Natural killer cell (primary cell): ENCODE measurements at regions of chr6 and their contacts with region 1.

Region 1: DNA sequence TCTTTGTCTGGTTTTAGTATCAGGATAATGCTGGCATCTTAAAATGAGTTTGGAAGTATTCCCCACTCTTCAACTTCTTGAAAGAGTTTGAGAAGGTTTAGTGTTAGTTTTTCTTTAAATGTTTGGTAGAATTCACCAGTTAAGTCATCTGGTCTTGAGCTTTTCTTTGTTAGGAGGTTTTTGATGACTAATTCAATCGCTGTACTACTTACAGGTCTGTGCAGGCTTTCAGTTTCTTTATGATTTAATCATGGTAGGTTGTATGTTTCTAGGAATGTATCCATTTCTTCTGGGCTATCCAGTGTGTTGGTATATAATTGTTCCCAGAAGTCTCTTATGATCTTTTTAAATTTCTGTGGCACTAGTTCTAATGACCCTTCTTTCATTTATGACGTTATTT is 215.5 kb downstream of the LRFN2 start:
- DNase-seq: no peak
- ATAC-seq: peak; percentile 58 to 72 (median 69)
- H3K4me3 ChIP-seq: no peak overlapping the region
- H3K4me3 Mint-ChIP-seq: peak overlapping the region; percentile 78
- H3K27ac ChIP-seq: peak overlapping the region; percentile 30
- H3K27ac Mint-ChIP-seq: peak overlapping the region; percentile 82 to 90
- H3K4me1 ChIP-seq: peaks cover 5% of the 10 kb centered on the region
- H3K4me1 Mint-ChIP-seq: peaks cover 60 to 66% of the 10 kb centered on the region in 2 donors
- H3K27me3 ChIP-seq: no peaks in the 10 kb centered on the region
- H3K27me3 Mint-ChIP-seq: no peaks in the 10 kb centered on the region
- CTCF ChIP-seq: no peak

Region 2: DNA sequence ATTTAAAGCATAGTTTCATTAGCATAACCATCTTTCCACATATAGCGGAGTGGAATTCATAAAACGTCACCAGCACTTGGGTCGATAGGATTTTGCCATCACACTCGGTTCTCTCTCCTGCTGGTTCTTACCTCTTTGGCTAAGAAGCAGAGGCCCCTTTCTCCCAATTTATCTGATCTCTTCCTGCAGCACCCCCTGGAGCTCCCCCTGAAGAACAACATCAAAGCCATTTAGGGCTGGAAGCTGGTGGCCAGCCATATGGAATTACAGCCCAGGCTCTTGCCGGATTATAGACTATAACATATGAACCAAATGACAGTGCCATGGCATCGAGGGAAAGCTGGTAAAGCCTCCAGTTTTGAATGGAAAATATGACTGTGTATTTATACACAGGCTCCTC is 640.1 kb before region 1 on chr6:
- intact Hi-C with region 1: no loop called
- DNase-seq: no peak
- ATAC-seq: no peak
- H3K4me3 ChIP-seq: no peak overlapping the region
- H3K4me3 Mint-ChIP-seq: no peak overlapping the region
- H3K27ac ChIP-seq: no peak overlapping the region
- H3K27ac Mint-ChIP-seq: no peak overlapping the region
- H3K4me1 ChIP-seq: no peaks in the 10 kb centered on the region
- H3K4me1 Mint-ChIP-seq: no peaks in the 10 kb centered on the region
- H3K27me3 ChIP-seq: peaks cover 2% of the 10 kb centered on the region
- H3K27me3 Mint-ChIP-seq: peaks cover 19 to 36% of the 10 kb centered on the region in 2 donors
- CTCF ChIP-seq: no peak

Region 3: GRCh38 chr6:40383348-40384115 is 11.9 kb after region 1 on chr6:
- intact Hi-C with region 1: no loop called
- DNase-seq: no peak
- ATAC-seq: no peak
- H3K4me3 ChIP-seq: no peak overlapping the region
- H3K4me3 Mint-ChIP-seq: no peak overlapping the region
- H3K27ac ChIP-seq: no peak overlapping the region
- H3K27ac Mint-ChIP-seq: no peak overlapping the region
- H3K4me1 ChIP-seq: no peaks in the 10 kb centered on the region
- H3K4me1 Mint-ChIP-seq: peaks cover 27% of the 10 kb centered on the region in 2 donors
- H3K27me3 ChIP-seq: no peaks in the 10 kb centered on the region
- H3K27me3 Mint-ChIP-seq: peaks cover 0 to 8% of the 10 kb centered on the region in 2 donors
- CTCF ChIP-seq: no peak

Region 4: DNA sequence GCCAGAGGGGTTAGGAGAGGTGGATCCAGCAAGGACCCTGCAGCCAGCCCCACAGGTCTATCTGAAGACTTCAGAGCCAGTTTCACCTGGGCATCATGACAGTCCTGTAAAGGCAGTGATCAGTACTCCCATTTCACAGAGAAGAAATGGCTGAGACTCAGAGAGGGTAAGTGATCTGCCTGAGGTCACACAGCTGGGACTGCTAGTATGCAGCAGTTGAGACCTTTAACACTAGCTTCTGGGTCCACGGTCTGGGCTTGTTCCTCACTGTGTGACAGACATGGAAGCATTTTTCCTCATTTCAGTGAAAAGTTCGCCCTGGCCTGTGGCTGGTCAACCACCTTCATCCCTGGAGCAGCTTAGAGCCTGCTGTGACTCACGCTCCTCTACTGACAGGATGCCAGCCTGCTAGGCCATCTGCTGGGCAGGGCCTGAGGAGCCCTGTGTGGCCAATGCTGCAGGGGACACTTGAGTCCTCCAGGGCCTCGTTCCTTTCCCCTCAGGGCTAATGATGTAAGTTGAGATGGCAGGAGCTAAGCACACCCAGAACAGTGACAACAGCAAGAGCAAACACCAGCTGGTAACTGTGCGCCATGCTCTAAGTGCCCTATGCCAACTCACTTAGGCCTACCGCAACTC is 23.6 kb after region 1 on chr6:
- intact Hi-C with region 1: no loop called
- DNase-seq: no peak
- ATAC-seq: no peak
- H3K4me3 ChIP-seq: no peak overlapping the region
- H3K4me3 Mint-ChIP-seq: peak overlapping the region; percentile 22
- H3K27ac ChIP-seq: no peak overlapping the region
- H3K27ac Mint-ChIP-seq: peak overlapping the region in 1 of 2 donors; percentile 33
- H3K4me1 ChIP-seq: peaks cover 10% of the 10 kb centered on the region
- H3K4me1 Mint-ChIP-seq: peaks cover 7 to 33% of the 10 kb centered on the region in 2 donors
- H3K27me3 ChIP-seq: no peaks in the 10 kb centered on the region
- H3K27me3 Mint-ChIP-seq: peaks cover 0 to 3% of the 10 kb centered on the region in 2 donors
- CTCF ChIP-seq: no peak

Region 5: DNA sequence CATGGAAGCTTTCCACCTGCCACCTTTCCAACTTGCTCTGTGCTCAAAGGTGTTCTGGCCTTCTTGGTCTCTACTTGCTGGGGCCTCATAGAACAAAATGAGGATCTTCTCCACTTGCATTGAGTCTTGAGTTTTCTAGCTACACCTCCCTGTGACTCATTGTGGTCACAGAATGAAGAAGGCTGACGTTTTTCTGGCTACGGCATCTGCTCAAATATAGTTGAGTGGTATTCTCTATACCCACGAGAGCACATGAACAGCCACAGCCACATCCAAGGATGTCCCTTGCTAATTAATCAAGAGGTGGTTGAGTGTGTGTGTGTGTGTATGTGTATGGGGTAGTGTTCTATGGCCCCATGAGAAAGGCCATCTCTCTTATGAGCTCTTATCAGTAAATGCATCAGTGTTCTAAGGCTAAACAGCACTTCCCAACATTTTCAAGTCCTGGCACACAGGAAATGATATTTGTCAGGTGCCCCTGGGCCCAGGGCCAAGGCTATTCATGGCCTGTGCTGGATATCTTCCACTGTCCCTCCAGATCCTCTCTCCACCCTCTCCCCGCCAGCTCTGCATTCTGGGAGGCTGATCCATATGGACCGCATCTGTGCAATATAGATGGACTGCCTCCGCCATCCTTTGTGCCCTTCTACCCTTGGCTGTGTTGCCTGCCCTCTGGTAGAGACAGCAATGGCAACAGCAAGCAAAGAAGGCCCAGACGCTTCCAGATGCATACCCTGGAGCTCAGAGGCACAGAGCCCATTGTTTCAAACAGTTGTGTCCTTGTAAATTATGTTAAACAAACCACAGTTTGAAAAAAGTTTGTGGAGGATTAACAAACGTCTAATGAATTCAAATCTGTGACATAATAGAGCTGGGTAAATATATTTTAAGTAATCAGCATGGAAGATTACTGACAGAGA is 65.3 kb after region 1 on chr6:
- intact Hi-C with region 1: loop called (anchors 2 kb)
- DNase-seq: peak; percentile 25 to 51
- ATAC-seq: peak; percentile 83 to 94 (median 87)
- H3K4me3 ChIP-seq: no peak overlapping the region
- H3K4me3 Mint-ChIP-seq: peak overlapping the region; percentile 0
- H3K27ac ChIP-seq: peak overlapping the region; percentile 71
- H3K27ac Mint-ChIP-seq: peak overlapping the region; percentile 82 to 90
- H3K4me1 ChIP-seq: peaks cover 27% of the 10 kb centered on the region
- H3K4me1 Mint-ChIP-seq: peaks cover 42 to 59% of the 10 kb centered on the region in 2 donors
- H3K27me3 ChIP-seq: no peaks in the 10 kb centered on the region
- H3K27me3 Mint-ChIP-seq: no peaks in the 10 kb centered on the region
- CTCF ChIP-seq: no peak

Region 6: DNA sequence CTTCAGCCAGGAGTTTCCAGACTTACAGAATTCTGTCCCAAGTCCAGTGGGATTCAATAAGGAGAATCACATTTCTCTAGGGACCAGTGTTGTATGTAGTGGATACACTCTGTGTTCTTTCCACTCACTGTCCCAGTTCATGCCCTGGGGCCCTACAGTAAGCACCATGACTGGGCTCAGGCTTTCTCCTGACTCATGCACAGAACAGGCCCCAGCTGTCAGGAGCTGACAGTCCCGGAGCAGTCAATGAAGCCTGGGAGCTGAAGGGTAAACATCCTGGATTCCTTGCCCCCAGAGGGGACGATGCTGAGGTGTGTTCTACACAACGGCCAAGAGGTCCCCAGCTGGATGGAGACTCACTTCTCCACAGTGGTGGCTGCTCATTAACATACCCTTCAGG is 255.7 kb after region 1 on chr6:
- intact Hi-C with region 1: no loop called
- DNase-seq: no peak
- ATAC-seq: no peak
- H3K4me3 ChIP-seq: no peak overlapping the region
- H3K4me3 Mint-ChIP-seq: no peak overlapping the region
- H3K27ac ChIP-seq: no peak overlapping the region
- H3K27ac Mint-ChIP-seq: no peak overlapping the region
- H3K4me1 ChIP-seq: no peaks in the 10 kb centered on the region
- H3K4me1 Mint-ChIP-seq: no peaks in the 10 kb centered on the region
- H3K27me3 ChIP-seq: no peaks in the 10 kb centered on the region
- H3K27me3 Mint-ChIP-seq: peaks cover 0 to 9% of the 10 kb centered on the region in 2 donors
- CTCF ChIP-seq: no peak